ENCODE measurements at regions of chr19 and their contacts with region 1.

Region 1: GRCh38 chr19:10431943-10432735 is 11.8 kb downstream of the PDE4A start:
- DNase-seq: no peak
- H3K4me3 ChIP-seq: peak overlapping the region; percentile 57
- CTCF ChIP-seq: no peak

Region 2: DNA sequence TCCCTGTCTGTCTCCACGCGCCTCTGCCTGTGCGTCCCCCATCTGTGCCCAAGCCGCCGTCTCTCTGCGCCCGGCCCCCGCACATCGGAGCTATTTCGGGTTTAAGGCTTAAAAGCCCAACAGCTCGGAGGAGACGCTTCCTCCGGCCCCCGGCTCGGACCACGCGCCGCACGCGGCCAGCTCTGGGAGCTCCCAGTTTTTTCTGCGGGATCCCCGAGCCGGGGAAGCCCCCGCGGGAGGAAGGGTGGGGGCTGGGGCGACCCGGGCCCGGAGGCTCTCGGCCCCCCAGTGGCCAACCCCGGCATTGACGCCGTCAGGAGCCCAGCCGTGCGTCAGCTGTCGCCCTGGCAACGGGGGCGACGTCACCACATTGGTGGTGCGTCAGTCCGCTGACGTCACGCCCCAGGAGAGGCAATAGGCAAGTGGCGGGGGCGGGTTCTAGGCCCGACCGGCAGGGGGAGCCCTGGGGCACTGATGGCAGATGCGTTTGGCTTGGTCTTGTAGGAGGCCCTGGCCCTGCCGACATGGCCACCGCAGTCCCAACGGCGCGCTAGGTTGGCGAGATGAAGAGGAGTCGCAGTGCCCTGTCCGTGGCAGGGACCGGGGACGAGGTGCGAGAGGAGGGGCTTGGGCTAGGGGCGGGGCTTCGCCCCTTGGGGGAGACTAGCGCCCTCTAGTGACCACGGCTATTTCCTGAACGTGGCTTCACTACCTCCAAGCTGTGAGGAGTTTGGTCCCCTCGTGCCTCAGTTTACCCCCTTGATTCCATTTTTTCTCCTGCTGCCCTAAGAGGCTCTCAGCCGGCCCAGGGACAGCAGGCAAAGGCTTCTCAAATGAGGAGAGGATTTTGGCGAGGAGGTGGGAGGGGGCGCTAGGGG is 15.5 kb before region 1 on chr19:
- CTCF ChIA-PET with region 1: interaction called, 392 read pairs
- POLR2A ChIA-PET with region 1: no interaction called
- DNase-seq: no peak
- H3K4me3 ChIP-seq: peak overlapping the region; percentile 64
- CTCF ChIP-seq: peak; percentile 83

Region 3: GRCh38 chr19:10491472-10492047 is 59.4 kb after region 1 on chr19:
- CTCF ChIA-PET with region 1: no interaction called
- POLR2A ChIA-PET with region 1: no interaction called
- DNase-seq: no peak
- H3K4me3 ChIP-seq: no peak overlapping the region
- CTCF ChIP-seq: no peak

Region 4: DNA sequence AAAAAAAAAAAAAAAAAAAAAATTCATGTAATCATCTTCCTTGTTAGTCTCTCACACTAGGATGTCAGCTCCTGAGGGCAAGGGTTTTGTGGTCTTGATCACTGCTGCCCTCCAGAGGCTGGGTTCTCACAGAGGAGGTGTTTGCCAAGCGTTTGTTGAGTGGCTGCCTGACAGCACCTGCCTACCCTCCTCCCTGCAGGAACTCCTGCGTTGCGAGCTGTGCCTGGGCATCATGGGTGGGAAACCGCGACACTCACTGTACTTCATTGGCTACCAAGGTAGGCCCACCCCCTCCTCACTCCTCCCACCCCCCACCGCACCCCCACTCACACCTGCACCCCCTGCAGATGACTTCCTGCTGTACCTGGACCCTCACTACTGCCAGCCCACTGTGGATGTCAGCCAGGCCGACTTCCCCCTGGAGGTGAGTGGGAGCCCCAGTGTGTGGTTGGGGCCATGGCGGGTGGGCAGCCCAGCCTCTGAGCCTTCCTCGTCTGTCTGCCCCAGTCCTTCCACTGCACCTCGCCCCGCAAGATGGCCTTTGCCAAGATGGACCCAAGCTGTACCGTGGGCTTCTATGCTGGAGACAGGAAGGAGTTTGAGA is 119.7 kb after region 1 on chr19:
- CTCF ChIA-PET with region 1: no interaction called
- POLR2A ChIA-PET with region 1: no interaction called
- DNase-seq: no peak
- H3K4me3 ChIP-seq: no peak overlapping the region
- CTCF ChIP-seq: no peak